ENCODE measurements at regions of chr13 and their contacts with region 1.

Region 1: DNA sequence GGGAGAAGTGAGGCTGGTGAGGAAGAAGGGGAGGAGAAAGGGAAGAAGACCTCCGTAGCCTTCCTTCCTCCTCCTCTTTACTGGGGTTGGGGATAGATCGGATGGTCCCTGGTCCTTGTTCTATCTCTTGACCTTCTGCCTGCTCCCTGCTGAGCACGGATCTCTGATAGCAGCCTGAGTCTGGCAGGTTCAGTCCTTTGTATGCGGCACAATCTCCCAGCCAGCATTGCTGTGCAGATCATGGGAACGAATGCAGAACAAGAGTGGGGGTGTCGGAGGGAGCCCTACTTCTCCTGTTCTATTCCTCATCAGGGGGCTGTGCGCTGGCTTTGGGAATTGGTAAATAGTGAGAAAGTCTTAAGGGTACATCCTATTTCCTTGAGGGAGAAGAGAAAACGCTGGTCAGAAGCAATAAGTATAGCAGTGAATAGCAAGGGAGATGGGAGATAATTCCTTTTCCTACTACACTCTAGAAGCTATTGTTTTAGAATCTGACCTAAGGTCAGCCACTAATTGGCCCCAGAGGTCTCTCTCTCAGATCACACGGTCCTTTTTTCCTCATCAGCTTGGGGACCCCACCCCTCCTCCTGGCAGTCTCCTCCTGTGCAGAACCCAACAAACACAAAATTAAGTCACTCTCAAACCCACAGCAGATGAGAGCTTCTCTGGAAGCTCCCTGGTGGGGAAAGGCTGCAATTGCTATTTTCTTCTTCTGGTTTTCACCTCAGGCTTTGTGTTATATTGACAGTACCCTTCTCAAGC is 41.0 kb downstream of the KL start:
- DNase-seq: no peak
- H3K4me3 ChIP-seq: no peak overlapping the region
- H3K27me3 ChIP-seq: no peaks in the 10 kb centered on the region
- CTCF ChIP-seq: peak; percentile 53

Region 2: DNA sequence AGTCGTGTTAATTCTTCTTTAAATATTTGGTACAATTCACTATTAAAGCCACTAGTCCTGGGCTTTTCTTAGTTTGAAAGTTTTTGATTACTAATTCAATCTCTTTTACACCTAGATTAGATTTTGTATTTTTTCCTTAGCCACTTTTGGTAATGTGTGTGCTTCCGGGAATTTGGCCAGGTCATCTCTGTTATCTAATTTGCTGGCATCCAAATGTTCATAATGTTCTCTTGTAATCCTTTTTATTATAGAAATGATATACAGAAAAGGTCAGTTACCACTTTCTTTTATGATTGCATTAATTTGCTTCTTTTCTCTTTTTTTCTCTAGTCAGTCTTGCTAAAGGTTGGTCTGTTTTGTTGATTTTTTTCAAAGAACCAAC is 11.0 kb before region 1 on chr13:
- CTCF ChIA-PET with region 1: interaction called, 12 read pairs
- POLR2A ChIA-PET with region 1: no interaction called
- DNase-seq: no peak
- H3K4me3 ChIP-seq: no peak overlapping the region
- H3K27me3 ChIP-seq: peaks cover 14% of the 10 kb centered on the region
- CTCF ChIP-seq: no peak

Region 3: GRCh38 chr13:33204130-33204927 is 147.1 kb after region 1 on chr13:
- CTCF ChIA-PET with region 1: no interaction called
- POLR2A ChIA-PET with region 1: no interaction called
- DNase-seq: peak; percentile 82
- H3K4me3 ChIP-seq: peak overlapping the region; percentile 25
- H3K27me3 ChIP-seq: no peaks in the 10 kb centered on the region
- CTCF ChIP-seq: no peak